Activated CD8-positive, alpha-beta memory T cell treated with anti-CD3 and anti-CD28 coated beads, Interleukin-2, amount 10 ng/mL, durations not matched to agents 7 days and 5 days (primary cell): ENCODE measurements at regions of chr1 and their contacts with region 1.

Region 1: DNA sequence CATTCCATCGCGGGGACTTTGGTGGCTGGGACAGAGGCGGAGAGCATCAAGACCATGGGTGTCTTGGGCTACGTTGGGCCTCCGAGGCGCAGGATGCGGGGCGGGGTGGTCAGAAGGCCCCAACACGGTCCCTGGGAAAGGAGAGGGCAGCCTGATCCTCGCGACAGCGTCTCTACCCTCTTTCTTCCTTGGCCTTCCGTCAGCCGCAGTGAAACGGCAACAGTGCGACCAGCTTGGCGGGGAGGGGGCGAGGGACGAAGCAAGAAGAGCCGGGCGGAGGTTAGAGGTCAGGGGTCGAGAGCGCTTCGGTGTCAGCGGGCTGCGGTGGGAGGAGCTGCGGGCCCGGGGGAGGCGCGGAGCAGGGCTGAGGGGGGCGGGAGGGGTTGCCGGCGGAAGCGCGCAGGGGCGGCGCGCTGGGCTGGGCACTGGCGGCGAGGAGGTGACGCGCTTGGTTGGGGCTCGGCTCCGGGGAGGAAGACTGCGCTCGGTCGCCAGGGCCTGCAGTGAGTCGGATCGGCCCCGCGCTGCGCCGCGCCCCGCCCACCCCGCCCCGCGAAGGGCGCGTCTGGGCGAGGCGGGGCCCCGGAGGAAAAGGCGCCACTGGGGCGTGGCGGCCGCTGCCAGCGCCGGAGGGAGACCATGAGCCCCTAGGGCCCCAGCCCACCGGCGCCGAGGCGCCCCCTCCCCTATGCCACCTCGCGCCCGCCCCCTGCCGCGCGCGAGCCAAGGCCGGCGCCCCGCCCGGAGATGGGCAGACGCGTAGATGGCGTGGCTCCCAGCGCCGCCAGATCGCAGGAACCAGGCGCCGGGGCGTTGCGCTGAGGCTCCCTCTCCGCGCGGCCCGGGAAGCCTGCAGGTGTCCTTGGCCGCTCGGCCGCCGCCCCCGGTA is at the start of gene KCNC4:
- DNase-seq: peak; percentile 96
- ATAC-seq: peak; percentile 93
- H3K4me3 Mint-ChIP-seq: peak within 1 kb of the TSS; percentile 79
- H3K27ac Mint-ChIP-seq: peak within 1 kb of the TSS; percentile 91
- H3K4me1 Mint-ChIP-seq: peaks cover 44% of the 10 kb centered on the region
- H3K27me3 Mint-ChIP-seq: peaks cover 13% of the 10 kb centered on the region
- total RNA-seq, gene KCNC4: 4.8 to 9.6 TPM

Region 2: DNA sequence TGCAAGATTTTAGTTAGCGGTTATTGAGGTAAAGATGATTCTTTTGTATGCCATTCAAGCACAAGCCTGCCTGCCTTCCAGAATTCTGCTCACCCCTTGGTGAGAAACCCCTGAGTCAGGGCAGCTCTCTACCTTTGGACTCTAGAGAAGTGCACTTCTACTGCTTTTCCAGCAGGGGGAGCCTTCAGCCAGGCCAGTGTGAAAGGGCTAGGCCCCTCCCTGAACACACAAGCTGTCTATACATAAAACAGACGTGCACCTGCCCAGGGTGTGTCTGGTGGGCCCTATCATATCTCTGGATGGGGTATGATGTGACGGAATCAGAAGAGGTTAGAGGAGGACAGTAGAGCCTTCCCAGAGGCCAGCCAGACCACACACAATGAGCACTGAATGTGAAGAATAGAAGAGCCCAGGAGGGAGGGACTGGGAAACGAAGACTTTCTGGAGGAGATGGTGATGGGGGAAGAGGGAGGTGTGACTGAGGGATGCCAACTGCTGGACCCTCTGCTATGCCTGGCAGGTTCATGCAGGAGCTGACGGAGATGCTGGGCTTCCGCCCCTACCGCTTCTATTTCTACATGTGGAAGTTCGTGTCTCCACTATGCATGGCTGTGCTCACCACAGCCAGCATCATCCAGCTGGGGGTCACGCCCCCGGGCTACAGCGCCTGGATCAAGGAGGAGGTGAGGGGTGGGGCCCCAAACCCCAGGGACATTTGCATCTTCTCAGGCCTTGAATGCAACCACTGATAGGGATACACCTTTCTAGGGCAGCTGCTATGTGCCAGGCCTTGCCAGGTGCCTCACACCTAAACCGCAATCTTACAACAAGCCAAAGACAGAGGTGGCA is 12.8 kb before region 1 on chr1:
- CTCF ChIA-PET with region 1: interaction called, 48 read pairs
- DNase-seq: peak; percentile 68
- ATAC-seq: peak; percentile 92
- H3K4me3 Mint-ChIP-seq: no peak overlapping the region
- H3K27ac Mint-ChIP-seq: no peak overlapping the region
- H3K4me1 Mint-ChIP-seq: no peaks in the 10 kb centered on the region
- H3K27me3 Mint-ChIP-seq: no peaks in the 10 kb centered on the region

Region 3: DNA sequence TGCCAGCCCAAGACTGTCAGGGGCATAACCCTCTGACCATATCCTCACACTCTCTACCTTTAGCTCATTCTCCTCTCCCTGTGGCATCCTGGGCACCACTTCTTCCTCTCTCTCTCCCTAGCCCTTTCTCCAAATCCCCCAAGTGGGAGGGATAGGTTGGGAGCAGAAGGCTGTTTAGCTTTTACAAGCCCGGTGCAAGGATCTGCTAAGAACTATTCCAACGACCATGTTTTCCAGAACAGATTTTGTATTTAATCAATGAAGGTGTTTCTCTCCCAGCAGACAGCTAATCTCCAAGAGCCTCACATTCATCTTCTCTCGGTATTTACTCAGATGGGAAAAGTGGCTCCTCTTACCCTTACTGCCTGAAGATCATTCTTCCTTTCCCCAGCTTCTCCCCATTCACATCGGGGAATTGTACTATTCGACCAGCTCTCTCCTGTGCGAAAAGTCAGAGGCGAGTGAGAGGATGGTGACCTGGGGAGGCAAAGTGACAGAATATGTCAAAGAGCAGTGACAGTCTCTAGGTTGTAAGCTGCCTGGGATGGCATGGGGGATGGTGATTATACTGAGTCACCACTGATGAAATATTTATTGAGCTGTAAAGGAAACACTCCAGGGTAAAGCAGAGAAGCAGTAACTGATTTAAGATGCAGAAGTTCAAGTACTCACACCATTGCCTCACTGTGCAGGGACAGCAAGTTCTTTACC is 82.2 kb after region 1 on chr1:
- CTCF ChIA-PET with region 1: interaction called, 10 read pairs
- DNase-seq: no peak
- ATAC-seq: no peak
- H3K4me3 Mint-ChIP-seq: no peak overlapping the region
- H3K27ac Mint-ChIP-seq: no peak overlapping the region
- H3K4me1 Mint-ChIP-seq: no peaks in the 10 kb centered on the region
- H3K27me3 Mint-ChIP-seq: peaks cover 4% of the 10 kb centered on the region

Region 4: GRCh38 chr1:110321846-110322245 is 111.9 kb after region 1 on chr1:
- CTCF ChIA-PET with region 1: interaction called, 415 read pairs
- DNase-seq: no peak
- ATAC-seq: no peak
- H3K4me3 Mint-ChIP-seq: no peak overlapping the region
- H3K27ac Mint-ChIP-seq: no peak overlapping the region
- H3K4me1 Mint-ChIP-seq: no peaks in the 10 kb centered on the region
- H3K27me3 Mint-ChIP-seq: no peaks in the 10 kb centered on the region

Region 5: GRCh38 chr1:110407260-110408210 is 197.6 kb after region 1 on chr1 and contains the start of gene LAMTOR5:
- CTCF ChIA-PET with region 1: interaction called, 17 read pairs
- DNase-seq: peak; percentile 96
- ATAC-seq: peak; percentile 95
- H3K4me3 Mint-ChIP-seq: peak within 1 kb of the TSS; percentile 98
- H3K27ac Mint-ChIP-seq: peak within 1 kb of the TSS; percentile 98
- H3K4me1 Mint-ChIP-seq: peaks cover 25% of the 10 kb centered on the region
- H3K27me3 Mint-ChIP-seq: no peaks in the 10 kb centered on the region
- total RNA-seq, gene LAMTOR5: 109 to 130 TPM